MCF 10A (cell line): ENCODE measurements at regions of chr5 and their contacts with region 1.

Region 1: GRCh38 chr5:66828548-66829357 is 232.6 kb downstream of the MAST4 start:
- DNase-seq: peak; percentile 67
- H3K4me3 Mint-ChIP-seq: peak overlapping the region; percentile 85
- H3K27ac Mint-ChIP-seq: peak overlapping the region; percentile 90
- H3K4me1 Mint-ChIP-seq: peaks cover 21% of the 10 kb centered on the region
- H3K27me3 Mint-ChIP-seq: no peaks in the 10 kb centered on the region
- CTCF ChIP-seq: no peak

Region 2: DNA sequence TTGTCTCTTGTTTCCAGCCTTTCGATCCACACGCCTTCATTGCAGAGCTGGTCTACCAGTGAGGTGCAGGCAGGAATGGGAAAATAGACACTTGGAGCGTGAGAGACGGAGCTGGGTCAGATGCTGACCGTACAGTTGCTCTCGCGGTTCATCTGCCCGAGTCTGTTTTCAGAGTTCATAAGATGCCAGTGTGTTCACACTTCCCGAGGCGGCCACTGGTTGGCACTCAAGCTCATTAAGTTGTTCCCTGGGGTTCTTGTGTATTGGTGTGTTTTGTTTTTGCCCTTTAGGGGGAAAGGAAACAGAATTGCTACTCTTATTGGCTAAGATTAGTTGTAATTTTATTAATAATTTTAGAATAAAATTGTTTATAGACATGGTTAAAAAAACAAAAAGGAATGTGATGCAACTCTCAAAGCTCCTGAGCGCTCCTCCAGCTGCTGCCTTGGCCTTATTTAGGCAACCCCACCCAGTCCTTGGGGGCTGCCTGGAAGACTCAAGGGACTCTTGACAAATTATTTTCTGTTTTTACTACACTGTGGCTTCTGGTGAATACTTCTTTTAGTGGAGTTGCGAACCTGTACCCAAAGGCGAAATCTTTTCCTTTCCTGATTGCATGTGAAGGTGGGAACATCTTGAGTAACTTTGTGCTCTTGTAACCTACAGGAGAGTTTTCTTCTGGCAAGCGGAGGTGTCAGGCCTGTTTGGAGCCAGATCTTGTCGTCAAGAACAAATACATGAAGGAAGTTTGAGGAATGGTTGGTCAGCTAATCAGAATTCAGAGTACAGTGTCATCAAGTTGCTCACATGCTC is 86.5 kb before region 1 on chr5:
- CTCF ChIA-PET with region 1: no interaction called
- POLR2A ChIA-PET with region 1: no interaction called
- intact Hi-C with region 1: no loop called
- DNase-seq: peak; percentile 26
- H3K4me3 Mint-ChIP-seq: no peak overlapping the region
- H3K27ac Mint-ChIP-seq: no peak overlapping the region
- H3K4me1 Mint-ChIP-seq: no peaks in the 10 kb centered on the region
- H3K27me3 Mint-ChIP-seq: peaks cover 33% of the 10 kb centered on the region
- CTCF ChIP-seq: no peak

Region 3: GRCh38 chr5:66814146-66814991 is 14.4 kb before region 1 on chr5:
- CTCF ChIA-PET with region 1: interaction called, 16 read pairs
- POLR2A ChIA-PET with region 1: interaction called, 27 read pairs
- intact Hi-C with region 1: no loop called
- DNase-seq: peak; percentile 69
- H3K4me3 Mint-ChIP-seq: no peak overlapping the region
- H3K27ac Mint-ChIP-seq: no peak overlapping the region
- H3K4me1 Mint-ChIP-seq: peaks cover 6% of the 10 kb centered on the region
- H3K27me3 Mint-ChIP-seq: no peaks in the 10 kb centered on the region
- CTCF ChIP-seq: peak; percentile 41

Region 4: DNA sequence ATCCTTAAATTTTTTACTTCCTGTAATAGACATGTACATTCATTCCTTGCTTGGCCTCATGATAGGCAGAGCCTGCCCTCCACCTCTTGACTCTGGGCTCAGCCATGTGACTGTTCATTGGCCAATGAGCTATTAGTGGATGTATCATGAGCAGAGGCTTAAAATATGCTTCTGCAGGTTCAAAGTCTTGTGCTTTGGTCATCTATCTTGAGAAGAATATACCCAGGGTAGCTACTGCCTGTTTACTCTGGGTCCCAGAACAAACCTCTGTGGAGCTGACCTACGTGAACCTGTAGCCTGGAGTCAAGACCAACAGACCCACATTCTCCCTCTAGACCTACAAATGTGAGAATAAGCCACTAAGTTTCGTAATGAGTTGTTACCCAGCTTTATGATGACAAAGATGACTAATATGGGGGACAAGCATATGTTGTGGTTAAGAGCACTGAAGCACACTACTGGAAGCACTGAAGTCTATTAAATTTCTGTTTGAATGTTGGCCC is 11.8 kb after region 1 on chr5:
- CTCF ChIA-PET with region 1: interaction called, 15 read pairs
- POLR2A ChIA-PET with region 1: interaction called, 27 read pairs
- intact Hi-C with region 1: no loop called
- DNase-seq: peak; percentile 22
- H3K4me3 Mint-ChIP-seq: no peak overlapping the region
- H3K27ac Mint-ChIP-seq: no peak overlapping the region
- H3K4me1 Mint-ChIP-seq: peaks cover 10% of the 10 kb centered on the region
- H3K27me3 Mint-ChIP-seq: no peaks in the 10 kb centered on the region
- CTCF ChIP-seq: no peak

Region 5: GRCh38 chr5:66849803-66850202 is 21.1 kb after region 1 on chr5:
- CTCF ChIA-PET with region 1: interaction called, 11 read pairs
- POLR2A ChIA-PET with region 1: interaction called, 73 read pairs
- intact Hi-C with region 1: no loop called
- DNase-seq: peak; percentile 78
- H3K4me3 Mint-ChIP-seq: peak overlapping the region; percentile 53
- H3K27ac Mint-ChIP-seq: peak overlapping the region; percentile 24
- H3K4me1 Mint-ChIP-seq: peaks cover 16% of the 10 kb centered on the region
- H3K27me3 Mint-ChIP-seq: no peaks in the 10 kb centered on the region
- CTCF ChIP-seq: no peak

Region 6: GRCh38 chr5:66882592-66883227 is 54.0 kb after region 1 on chr5:
- CTCF ChIA-PET with region 1: interaction called, 3 read pairs
- POLR2A ChIA-PET with region 1: interaction called, 10 read pairs
- intact Hi-C with region 1: no loop called
- DNase-seq: peak; percentile 88
- H3K4me3 Mint-ChIP-seq: peak overlapping the region; percentile 9
- H3K27ac Mint-ChIP-seq: peak overlapping the region; percentile 60
- H3K4me1 Mint-ChIP-seq: peaks cover 28% of the 10 kb centered on the region
- H3K27me3 Mint-ChIP-seq: no peaks in the 10 kb centered on the region
- CTCF ChIP-seq: no peak

Region 7: GRCh38 chr5:67516948-67517565 is 688.3 kb after region 1 on chr5:
- CTCF ChIA-PET with region 1: no interaction called
- POLR2A ChIA-PET with region 1: no interaction called
- intact Hi-C with region 1: no loop called
- DNase-seq: no peak
- H3K4me3 Mint-ChIP-seq: no peak overlapping the region
- H3K27ac Mint-ChIP-seq: peak overlapping the region; percentile 1
- H3K4me1 Mint-ChIP-seq: peaks cover 11% of the 10 kb centered on the region
- H3K27me3 Mint-ChIP-seq: no peaks in the 10 kb centered on the region
- CTCF ChIP-seq: no peak